ENCODE measurements at regions of chr17 and their contacts with region 1.

Region 1: GRCh38 chr17:56715613-56716357 is 117.9 kb downstream of the C17orf67 start:
- DNase-seq: peak; percentile 58 to 82
- ATAC-seq: peak; percentile 86 to 94 (median 87)
- H3K4me3 ChIP-seq: no peak overlapping the region
- H3K27ac ChIP-seq: no peak overlapping the region
- H3K4me1 ChIP-seq: peaks cover 0 to 4% (median 0%) of the 10 kb centered on the region in 9 donors
- H3K27me3 ChIP-seq: peaks cover 0 to 26% (median 7%) of the 10 kb centered on the region in 7 donors
- CTCF ChIP-seq: peak; percentile 78 to 88 (median 83)

Region 2: GRCh38 chr17:55527540-55528118 is 1188.2 kb before region 1 on chr17:
- intact Hi-C with region 1: loop called in 1 of 10 experiments (anchors 5 kb)
- DNase-seq: peak in 1 of 2 donors; percentile 25
- ATAC-seq: peak in 7 of 8 donors; percentile 54 to 89 (median 83)
- H3K4me3 ChIP-seq: no peak overlapping the region
- H3K27ac ChIP-seq: no peak overlapping the region
- H3K4me1 ChIP-seq: peaks cover 0 to 6% (median 0%) of the 10 kb centered on the region in 9 donors
- H3K27me3 ChIP-seq: peaks cover 0 to 9% (median 0%) of the 10 kb centered on the region in 7 donors
- CTCF ChIP-seq: peak; percentile 14 to 71 (median 60)

Region 3: GRCh38 chr17:55845385-55845784 is 870.4 kb before region 1 on chr17:
- intact Hi-C with region 1: loop called in 3 of 10 experiments (anchors 5 to 10 kb)
- DNase-seq: peak; percentile 37 to 51
- ATAC-seq: peak; percentile 71 to 91 (median 84)
- H3K4me3 ChIP-seq: peak overlapping the region in 7 of 10 donors; percentile 6 to 39 (median 36)
- H3K27ac ChIP-seq: no peak overlapping the region
- H3K4me1 ChIP-seq: peaks cover 0 to 7% (median 0%) of the 10 kb centered on the region in 9 donors
- H3K27me3 ChIP-seq: no peaks in the 10 kb centered on the region
- CTCF ChIP-seq: peak in 8 of 9 donors; percentile 40 to 76 (median 60)

Region 4: DNA sequence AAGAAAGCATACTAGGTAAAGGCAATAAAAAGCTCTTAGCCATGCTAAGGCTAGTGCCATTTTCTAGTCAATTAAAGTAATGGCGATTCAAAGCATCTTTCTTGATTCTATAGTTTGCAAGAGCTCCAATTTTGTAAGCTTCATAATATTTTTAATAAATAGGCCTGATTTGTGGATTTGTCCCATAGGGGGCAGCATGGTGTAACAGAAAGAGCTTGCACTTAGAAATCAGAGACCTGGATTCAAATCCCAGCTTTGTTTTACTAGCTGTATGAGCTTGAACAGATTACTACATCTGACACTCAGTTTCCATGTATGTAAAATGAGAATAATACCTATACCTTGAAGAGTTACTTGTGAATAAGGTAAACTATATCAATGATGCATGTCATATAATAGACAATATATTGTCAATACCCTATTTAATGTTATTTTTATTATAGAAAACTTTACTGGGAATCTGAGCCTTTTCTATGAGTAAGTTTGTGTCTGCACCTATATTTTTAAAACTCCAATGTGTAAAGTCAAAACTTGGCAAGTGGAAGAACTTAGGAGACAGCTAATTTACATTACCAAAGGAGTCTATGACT is 215.9 kb before region 1 on chr17:
- intact Hi-C with region 1: loop called in 4 of 10 experiments (anchors 5 to 10 kb)
- DNase-seq: no peak
- ATAC-seq: no peak
- H3K4me3 ChIP-seq: no peak overlapping the region
- H3K27ac ChIP-seq: no peak overlapping the region
- H3K4me1 ChIP-seq: no peaks in the 10 kb centered on the region
- H3K27me3 ChIP-seq: no peaks in the 10 kb centered on the region
- CTCF ChIP-seq: peak in 7 of 9 donors; percentile 32 to 54 (median 45)

Region 5: GRCh38 chr17:56510554-56511342 is 205.0 kb before region 1 on chr17:
- intact Hi-C with region 1: loop called in 1 of 10 experiments (anchors 10 kb)
- DNase-seq: no peak
- ATAC-seq: no peak
- H3K4me3 ChIP-seq: no peak overlapping the region
- H3K27ac ChIP-seq: no peak overlapping the region
- H3K4me1 ChIP-seq: no peaks in the 10 kb centered on the region
- H3K27me3 ChIP-seq: peaks cover 0 to 8% (median 0%) of the 10 kb centered on the region in 7 donors
- CTCF ChIP-seq: no peak

Region 6: DNA sequence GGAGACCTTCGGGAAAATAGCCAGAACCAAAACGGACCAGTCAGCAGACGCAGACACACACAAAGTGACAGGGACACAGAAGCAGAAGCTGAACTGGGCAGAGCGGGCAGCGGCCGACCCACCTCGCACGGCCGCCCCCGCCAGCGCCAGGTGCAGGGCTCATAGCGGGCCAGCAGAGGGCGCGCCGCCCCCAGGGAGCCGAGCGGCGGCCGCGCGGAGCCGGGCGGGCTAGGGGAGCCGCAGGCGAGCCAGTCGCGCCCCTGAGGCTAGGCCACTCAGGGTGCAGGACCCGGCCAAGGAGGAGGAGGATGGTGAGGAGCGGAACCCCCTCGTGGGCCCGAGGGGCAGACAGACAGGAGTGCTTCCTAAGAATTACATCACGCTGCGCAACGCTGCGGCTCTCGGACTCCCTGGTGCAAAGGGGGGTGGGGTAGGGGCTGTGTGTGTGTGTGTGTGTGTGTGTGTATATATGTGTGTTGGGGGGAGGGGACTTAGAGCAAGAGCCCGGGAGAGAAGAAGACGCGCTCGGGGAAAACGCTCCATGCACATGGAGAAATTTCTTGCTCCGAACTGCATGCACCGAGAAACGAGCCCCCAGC is 123.2 kb before region 1 on chr17:
- intact Hi-C with region 1: loop called (anchors 1 to 2 kb)
- DNase-seq: peak; percentile 46 to 67
- ATAC-seq: peak; percentile 82 to 87 (median 84)
- H3K4me3 ChIP-seq: peak overlapping the region; percentile 30 to 78 (median 59)
- H3K27ac ChIP-seq: no peak overlapping the region
- H3K4me1 ChIP-seq: peaks cover 13 to 48% (median 32%) of the 10 kb centered on the region in 9 donors
- H3K27me3 ChIP-seq: peaks cover 0 to 89% (median 65%) of the 10 kb centered on the region in 7 donors
- CTCF ChIP-seq: peak; percentile 82 to 99 (median 96)

Region 7: DNA sequence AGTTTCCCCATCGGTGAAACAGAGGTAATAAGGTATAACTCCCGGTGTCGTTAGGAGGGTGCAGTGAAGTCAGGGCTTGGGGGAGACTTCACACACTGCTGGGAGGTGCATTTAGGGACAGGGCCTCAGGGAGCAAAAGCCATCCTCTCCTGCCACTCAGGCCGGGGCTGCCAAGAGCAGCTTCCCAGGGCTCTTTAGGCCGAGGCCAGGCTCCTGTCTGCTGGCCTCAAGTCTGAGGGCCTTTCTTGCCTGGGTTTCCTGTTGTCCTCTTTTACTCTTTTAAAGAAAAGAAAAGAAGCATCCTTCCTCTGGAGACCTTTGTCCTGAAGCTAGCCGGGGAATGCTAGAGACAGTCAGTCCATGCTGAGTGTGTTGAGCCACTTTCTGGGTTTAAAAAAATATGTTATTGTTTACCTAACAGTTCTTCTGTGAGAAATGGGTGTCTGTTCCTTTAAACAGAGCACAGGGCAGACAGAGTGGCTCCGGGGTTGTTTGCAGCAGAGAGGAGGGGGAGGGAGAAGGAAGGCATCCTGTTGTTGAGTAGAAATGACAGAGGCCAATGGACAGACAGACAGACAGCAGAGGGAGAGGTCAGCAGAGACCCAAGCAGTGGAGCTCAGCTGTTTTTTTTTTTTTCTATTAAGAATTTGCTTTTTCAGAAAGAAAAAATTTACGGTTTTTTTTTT is 38.9 kb after region 1 on chr17:
- intact Hi-C with region 1: no loop called
- DNase-seq: no peak
- ATAC-seq: peak in 1 of 8 donors; percentile 58
- H3K4me3 ChIP-seq: no peak overlapping the region
- H3K27ac ChIP-seq: no peak overlapping the region
- H3K4me1 ChIP-seq: peaks cover 0 to 31% (median 20%) of the 10 kb centered on the region in 9 donors
- H3K27me3 ChIP-seq: peaks cover 0 to 11% (median 0%) of the 10 kb centered on the region in 7 donors
- CTCF ChIP-seq: no peak

Region 8: DNA sequence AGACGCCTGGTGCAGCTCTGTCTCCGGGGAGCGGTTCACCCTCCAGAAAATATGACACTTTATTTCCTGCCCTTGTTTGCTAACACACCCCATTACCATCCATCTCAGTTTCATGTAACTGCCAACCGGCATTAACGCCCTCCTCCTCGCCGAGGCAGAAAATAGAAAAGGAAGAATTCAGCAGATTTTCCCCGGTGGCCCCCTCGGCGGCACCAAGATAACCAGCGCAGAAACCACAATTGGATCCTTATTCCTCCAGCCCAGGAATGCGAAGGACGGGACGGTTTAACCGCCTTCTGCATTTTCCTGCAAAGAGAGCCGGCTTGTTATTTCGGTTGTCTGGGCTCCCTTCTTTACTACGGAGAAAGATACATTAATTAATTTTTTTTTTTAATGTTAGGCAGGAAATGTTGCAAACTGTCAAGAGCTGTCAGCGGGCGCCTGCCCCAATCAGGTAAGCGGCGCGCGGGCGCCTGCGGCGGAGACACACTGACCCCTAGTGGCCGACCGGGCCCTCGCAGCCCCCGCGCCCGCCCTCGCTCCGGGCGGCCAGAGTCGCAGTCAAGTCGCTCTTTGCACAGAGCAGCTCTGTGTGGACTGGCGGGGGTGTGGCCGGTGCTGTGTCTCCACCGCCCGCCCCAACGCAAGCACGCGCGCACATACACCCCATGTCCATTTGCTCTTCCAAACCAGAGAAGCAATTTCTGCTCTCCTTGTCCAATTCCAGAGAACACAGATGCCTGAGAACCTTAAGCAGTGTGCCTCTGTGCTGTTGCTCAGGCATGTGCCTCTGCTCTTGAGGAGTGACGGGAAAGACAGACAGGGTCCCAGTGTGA is 64.3 kb after region 1 on chr17:
- intact Hi-C with region 1: loop called in 2 of 10 experiments (anchors 5 kb)
- DNase-seq: peak; percentile 62 to 77
- ATAC-seq: peak; percentile 95 to 97 (median 96)
- H3K4me3 ChIP-seq: peak overlapping the region in 9 of 10 donors; percentile 10 to 44 (median 39)
- H3K27ac ChIP-seq: no peak overlapping the region
- H3K4me1 ChIP-seq: peaks cover 0 to 12% (median 10%) of the 10 kb centered on the region in 9 donors
- H3K27me3 ChIP-seq: peaks cover 0 to 51% (median 36%) of the 10 kb centered on the region in 7 donors
- CTCF ChIP-seq: peak; percentile 97 to 100 (median 99)

Region 9: DNA sequence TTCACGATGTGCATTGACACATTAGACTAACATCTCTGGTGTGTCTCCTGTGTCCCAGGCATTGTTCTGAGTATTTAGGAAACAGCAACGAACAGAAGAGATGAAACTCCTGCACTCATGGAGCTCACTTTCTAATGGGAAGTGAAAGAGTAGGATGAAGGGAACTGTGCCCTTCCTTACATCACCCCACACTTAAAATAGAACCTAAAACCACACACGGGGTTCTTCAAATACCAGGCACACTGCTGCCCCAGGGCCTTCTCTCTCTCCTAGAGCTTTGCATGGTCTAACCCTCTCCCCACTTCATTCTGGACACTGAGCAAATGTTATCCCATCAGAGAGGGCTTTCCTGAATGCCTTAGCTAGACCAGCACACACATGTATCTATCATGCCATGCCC is 164.3 kb after region 1 on chr17:
- intact Hi-C with region 1: no loop called
- DNase-seq: no peak
- ATAC-seq: peak in 3 of 8 donors; percentile 15 to 52 (median 47)
- H3K4me3 ChIP-seq: no peak overlapping the region
- H3K27ac ChIP-seq: no peak overlapping the region
- H3K4me1 ChIP-seq: peaks cover 0 to 12% (median 0%) of the 10 kb centered on the region in 9 donors
- H3K27me3 ChIP-seq: no peaks in the 10 kb centered on the region
- CTCF ChIP-seq: no peak

Measured in heart right ventricle (tissue), 16 donors.